ENCODE measurements at regions of chr13 and their contacts with region 1.

Region 1: GRCh38 chr13:45242070-45242469 is 41.2 kb upstream of the KCTD4 start:
- DNase-seq: no peak
- ATAC-seq: no peak
- H3K4me3 ChIP-seq: no peak overlapping the region
- H3K27ac ChIP-seq: no peak overlapping the region
- H3K4me1 ChIP-seq: 0 out of 2 replicates have a peak, but pooled peaks cover 6% of the 10 kb centered on the region
- H3K27me3 ChIP-seq: no peaks in the 10 kb centered on the region
- CTCF ChIP-seq: no peak

Region 2: DNA sequence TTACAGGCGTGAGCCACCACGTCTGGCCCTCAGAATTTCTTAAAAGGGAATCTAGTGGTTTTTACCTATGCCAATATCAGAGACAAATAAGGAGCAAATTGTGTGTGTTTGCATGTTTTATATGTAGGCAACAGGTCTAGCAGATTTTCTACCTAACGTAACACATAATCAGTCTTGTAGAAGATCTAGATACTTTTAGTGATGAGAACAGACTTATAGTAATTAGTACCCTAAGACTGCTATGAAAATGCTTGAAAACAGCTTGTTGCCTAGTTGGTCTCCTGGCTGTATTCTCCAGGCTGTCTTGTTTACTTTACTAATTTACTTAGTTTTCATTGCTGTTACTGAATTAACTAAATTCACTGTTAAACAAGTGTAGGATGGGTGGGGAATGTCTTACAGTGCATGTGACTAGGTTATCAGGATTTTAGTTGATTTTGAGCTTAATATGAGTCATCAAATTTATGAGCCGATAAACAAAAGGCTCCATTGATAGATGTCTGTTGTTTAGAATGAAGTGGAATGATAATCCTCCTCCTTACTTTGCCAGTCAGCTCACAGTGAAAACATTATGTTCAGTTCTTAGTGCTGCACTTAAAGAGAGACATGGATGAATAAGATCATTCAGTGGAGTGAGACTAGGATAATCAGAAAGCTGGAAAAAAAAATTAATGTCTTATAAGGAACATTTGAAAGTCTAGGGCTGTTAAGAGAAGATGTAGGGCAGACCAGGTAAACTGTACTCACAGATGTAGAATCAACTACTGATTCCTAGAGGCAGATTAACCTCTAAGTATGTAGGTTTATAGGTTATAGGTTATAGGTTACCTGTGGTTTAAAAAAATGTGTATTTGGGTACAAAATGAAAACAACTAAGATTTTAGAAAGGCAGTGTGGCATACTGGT is 99.4 kb before region 1 on chr13:
- CTCF ChIA-PET with region 1: no interaction called
- POLR2A ChIA-PET with region 1: interaction called, 13 read pairs
- in situ Hi-C with region 1: no loop called
- intact Hi-C with region 1: no loop called
- DNase-seq: no peak
- ATAC-seq: peak; percentile 88
- H3K4me3 ChIP-seq: no peak overlapping the region
- H3K27ac ChIP-seq: peak overlapping the region; percentile 87
- H3K4me1 ChIP-seq: peaks cover 25% of the 10 kb centered on the region
- H3K27me3 ChIP-seq: no peaks in the 10 kb centered on the region
- CTCF ChIP-seq: no peak

Measured in Panc1 (cell line).